ENCODE measurements at regions of chr1 and their contacts with region 1.

Region 1: DNA sequence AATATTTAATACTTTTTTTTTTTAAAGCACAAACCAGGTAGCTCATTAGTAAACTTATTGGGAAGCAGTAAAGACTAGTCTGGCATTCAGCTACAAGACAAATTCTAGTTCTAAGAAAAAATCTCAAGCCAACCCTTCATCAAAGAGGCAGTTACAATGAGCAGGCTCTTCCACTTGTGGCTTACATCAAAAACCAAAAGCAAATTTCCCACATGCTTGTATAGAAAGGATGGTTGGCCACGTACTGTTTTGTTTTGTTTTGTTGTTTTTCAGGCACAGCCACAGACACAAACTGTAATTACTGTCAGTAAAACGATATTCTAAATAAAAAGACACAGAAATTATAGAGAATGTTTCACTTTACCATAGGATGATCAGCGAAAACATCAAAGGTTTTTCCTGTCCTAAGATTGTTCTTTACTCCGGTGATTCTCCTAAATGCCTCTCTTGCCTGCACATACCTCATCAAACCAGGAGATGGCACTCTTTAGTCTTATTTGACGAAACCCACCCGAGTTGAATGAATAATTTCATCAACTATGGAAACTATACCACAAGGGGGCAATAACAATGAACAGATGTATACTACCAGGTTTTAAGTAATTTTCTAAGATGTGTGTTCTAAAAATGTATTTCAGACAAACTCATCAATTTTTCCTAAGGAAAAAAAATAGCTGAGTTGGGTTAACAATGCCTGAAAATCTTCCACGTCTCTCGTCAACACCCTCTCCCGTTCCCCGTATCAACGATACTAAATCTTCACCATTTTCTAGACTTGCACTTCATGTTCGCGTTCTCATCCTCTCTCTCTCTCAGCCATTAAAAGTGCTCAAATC is 26.9 kb downstream of the RPL5 start:
- DNase-seq: peak; percentile 71
- H3K4me3 ChIP-seq: no peak overlapping the region; a peak in 1 of 4 replicates
- H3K27ac ChIP-seq: no peak overlapping the region
- H3K4me1 ChIP-seq: peaks cover 0 to 6% of the 10 kb centered on the region in 2 experiments; a peak in 1 of 4 replicates
- H3K27me3 ChIP-seq: no peaks in the 10 kb centered on the region
- CTCF ChIP-seq: peak; percentile 99
- EP300 ChIP-seq: no peak
- RAD21 ChIP-seq: peak; percentile 99

Region 2: GRCh38 chr1:92872719-92873118 is 13.9 kb after region 1 on chr1:
- CTCF ChIA-PET with region 1: interaction called, 46 read pairs
- POLR2A ChIA-PET with region 1: no interaction called
- DNase-seq: no peak
- H3K4me3 ChIP-seq: no peak overlapping the region
- H3K27ac ChIP-seq: no peak overlapping the region
- H3K4me1 ChIP-seq: peaks cover 0 to 8% of the 10 kb centered on the region in 2 experiments; a peak in 1 of 4 replicates
- H3K27me3 ChIP-seq: no peaks in the 10 kb centered on the region
- CTCF ChIP-seq: no peak
- EP300 ChIP-seq: no peak
- RAD21 ChIP-seq: no peak

Region 3: DNA sequence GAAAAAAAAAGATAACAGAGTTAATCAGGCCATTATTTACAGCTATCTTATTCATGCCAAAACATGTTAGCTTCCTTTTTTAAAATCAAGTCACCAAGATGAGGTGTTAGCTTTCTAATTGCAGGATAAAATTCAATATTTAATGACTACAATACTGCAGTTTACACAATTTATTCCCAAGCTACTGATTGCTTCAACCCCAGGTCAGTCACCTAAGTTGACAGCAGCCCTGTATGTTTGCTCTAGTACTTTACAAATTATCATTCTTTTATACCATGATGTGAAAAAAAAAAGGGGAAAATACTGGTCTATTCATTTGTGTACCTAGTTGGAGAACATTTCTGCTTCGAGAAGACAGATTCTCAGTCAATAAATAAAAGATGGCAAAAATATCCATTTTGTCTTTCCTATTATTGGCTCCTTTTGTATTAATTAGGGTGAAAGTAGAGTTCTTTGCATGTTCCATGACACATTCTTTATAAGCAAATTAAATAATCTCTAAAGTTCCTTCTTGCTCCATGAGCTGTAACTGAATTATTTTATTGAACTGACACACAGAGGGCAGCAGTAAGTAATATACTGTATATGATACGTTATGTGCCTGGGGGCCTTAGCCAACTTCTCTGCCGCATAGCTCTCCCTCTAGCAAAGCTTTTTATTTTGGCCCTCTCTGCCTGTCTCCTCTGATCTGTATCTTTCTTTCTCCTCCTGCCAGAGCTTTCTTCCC is 54.5 kb after region 1 on chr1:
- CTCF ChIA-PET with region 1: interaction called, 17 read pairs
- POLR2A ChIA-PET with region 1: no interaction called
- DNase-seq: no peak
- H3K4me3 ChIP-seq: no peak overlapping the region
- H3K27ac ChIP-seq: no peak overlapping the region
- H3K4me1 ChIP-seq: peaks cover 2 to 12% of the 10 kb centered on the region in 2 experiments; a peak in 2 of 4 replicates
- H3K27me3 ChIP-seq: no peaks in the 10 kb centered on the region
- CTCF ChIP-seq: no peak
- EP300 ChIP-seq: no peak
- RAD21 ChIP-seq: no peak

Region 4: DNA sequence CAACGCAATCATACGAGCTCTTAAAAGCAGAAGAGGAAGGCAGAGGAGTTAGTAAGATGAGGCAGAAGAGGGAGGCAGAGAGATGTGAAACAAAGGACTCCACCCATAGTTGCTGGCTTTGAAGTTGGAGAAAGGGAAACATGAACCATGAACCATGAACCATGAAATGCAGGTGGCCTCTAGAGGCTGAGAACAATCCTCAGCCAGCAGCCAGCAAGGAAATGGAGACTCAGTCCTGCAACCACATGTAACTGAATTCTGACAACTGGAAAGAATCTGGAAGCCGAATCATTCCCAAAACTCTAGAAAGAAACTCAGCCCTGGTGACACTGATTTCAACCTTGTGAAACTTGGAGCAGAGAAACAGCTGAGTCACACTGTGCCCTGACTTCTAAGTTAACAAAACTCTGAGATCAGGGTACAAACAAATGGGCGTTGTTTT is 92.4 kb after region 1 on chr1:
- CTCF ChIA-PET with region 1: interaction called, 163 read pairs
- POLR2A ChIA-PET with region 1: no interaction called
- DNase-seq: no peak
- H3K4me3 ChIP-seq: no peak overlapping the region
- H3K27ac ChIP-seq: peak overlapping the region; percentile 34 to 35; a peak in 3 of 4 replicates
- H3K4me1 ChIP-seq: peaks cover 5 to 13% of the 10 kb centered on the region in 2 experiments; a peak in 3 of 4 replicates
- H3K27me3 ChIP-seq: no peaks in the 10 kb centered on the region
- CTCF ChIP-seq: no peak
- EP300 ChIP-seq: no peak
- RAD21 ChIP-seq: no peak

Region 5: GRCh38 chr1:92975551-92976232 is 116.9 kb after region 1 on chr1:
- CTCF ChIA-PET with region 1: interaction called, 10 read pairs
- POLR2A ChIA-PET with region 1: no interaction called
- DNase-seq: no peak
- H3K4me3 ChIP-seq: no peak overlapping the region
- H3K27ac ChIP-seq: no peak overlapping the region
- H3K4me1 ChIP-seq: no peaks in the 10 kb centered on the region
- H3K27me3 ChIP-seq: no peaks in the 10 kb centered on the region; the same call in 1 of the 2 replicates
- CTCF ChIP-seq: no peak
- EP300 ChIP-seq: no peak
- RAD21 ChIP-seq: no peak

Region 6: GRCh38 chr1:93007941-93008577 is 149.3 kb after region 1 on chr1:
- CTCF ChIA-PET with region 1: interaction called, 31 read pairs
- POLR2A ChIA-PET with region 1: interaction called, 3 read pairs
- DNase-seq: no peak
- H3K4me3 ChIP-seq: no peak overlapping the region
- H3K27ac ChIP-seq: no peak overlapping the region
- H3K4me1 ChIP-seq: no peaks in the 10 kb centered on the region
- H3K27me3 ChIP-seq: no peaks in the 10 kb centered on the region
- CTCF ChIP-seq: no peak
- EP300 ChIP-seq: no peak
- RAD21 ChIP-seq: no peak